ENCODE measurements at regions of chr5 and their contacts with region 1.

Region 1: DNA sequence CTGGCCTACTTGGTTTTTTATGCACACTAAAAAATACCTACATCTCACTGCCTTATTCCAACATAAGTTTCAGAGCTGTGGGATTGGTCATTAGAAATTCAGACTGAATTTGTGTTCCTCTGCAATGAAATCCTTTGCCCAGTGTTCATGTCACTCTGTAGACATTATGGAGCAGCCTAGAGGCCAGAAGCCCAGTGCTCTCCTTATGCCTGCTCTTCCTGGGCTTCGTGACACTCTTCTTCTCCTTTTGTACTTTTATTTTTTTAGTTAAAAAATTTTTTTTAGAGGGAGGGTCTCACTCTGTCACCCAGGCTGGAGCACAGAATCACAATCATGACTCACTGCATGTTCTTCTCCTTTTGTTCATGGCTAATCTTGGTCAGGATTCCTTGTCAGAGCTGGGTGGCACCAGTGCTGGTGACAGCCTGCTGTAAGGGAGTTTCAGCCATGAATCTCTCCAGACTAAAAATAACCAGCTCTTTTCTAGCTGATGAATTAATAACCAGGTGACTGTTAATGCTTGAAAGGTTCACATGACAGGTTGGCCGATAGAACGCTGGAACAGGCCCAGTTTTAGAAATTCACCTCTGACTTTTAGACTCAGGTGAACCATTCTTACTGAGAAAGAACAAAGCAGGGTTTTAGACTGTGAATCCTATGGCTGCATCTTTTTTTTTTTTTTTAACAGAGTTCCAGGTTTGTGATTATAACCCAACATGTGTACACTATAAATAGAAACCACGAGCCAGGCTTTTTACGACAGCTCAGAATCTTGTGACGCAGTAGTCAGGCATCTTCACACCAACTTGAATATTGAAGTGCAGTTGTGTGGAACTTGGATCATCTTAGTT is 34.1 kb upstream of the C5orf47 start:
- DNase-seq: no peak
- ATAC-seq: peak; percentile 86
- H3K4me3 ChIP-seq: no peak overlapping the region
- H3K27ac ChIP-seq: peak overlapping the region; percentile 9 to 71
- H3K4me1 ChIP-seq: peaks cover 15 to 17% of the 10 kb centered on the region in 2 donors
- H3K27me3 ChIP-seq: no peaks in the 10 kb centered on the region
- CTCF ChIP-seq: no peak

Region 2: GRCh38 chr5:173907686-173908371 is 47.1 kb before region 1 on chr5:
- intact Hi-C with region 1: loop called in 1 of 2 experiments (anchors 10 kb)
- DNase-seq: no peak
- ATAC-seq: peak; percentile 39
- H3K4me3 ChIP-seq: no peak overlapping the region
- H3K27ac ChIP-seq: peak overlapping the region; percentile 13 to 69
- H3K4me1 ChIP-seq: peaks cover 11 to 71% of the 10 kb centered on the region in 2 donors
- H3K27me3 ChIP-seq: no peaks in the 10 kb centered on the region
- CTCF ChIP-seq: no peak

Region 3: GRCh38 chr5:174045470-174046025 is 90.7 kb after region 1 on chr5 and contains the start of gene NSG2:
- intact Hi-C with region 1: no loop called
- DNase-seq: peak; percentile 84 to 96 (median 86)
- ATAC-seq: peak; percentile 100
- H3K4me3 ChIP-seq: no peak within 1 kb of the TSS
- H3K27ac ChIP-seq: no peak within 1 kb of the TSS
- H3K4me1 ChIP-seq: no peaks in the 10 kb centered on the region
- H3K27me3 ChIP-seq: peaks cover 0 to 31% of the 10 kb centered on the region in 2 donors
- CTCF ChIP-seq: peak in 1 of 2 donors; percentile 37
- polyA plus RNA-seq, gene NSG2: 2.1 to 3.3 (median 2.3) TPM

Measured in left lung (tissue), 14 donors.